Activated CD4-positive, alpha-beta T cell treated with anti-CD3 and anti-CD28 coated beads for 36 hours (primary cell): ENCODE measurements at regions of chr2 and their contacts with region 1.

Region 1: DNA sequence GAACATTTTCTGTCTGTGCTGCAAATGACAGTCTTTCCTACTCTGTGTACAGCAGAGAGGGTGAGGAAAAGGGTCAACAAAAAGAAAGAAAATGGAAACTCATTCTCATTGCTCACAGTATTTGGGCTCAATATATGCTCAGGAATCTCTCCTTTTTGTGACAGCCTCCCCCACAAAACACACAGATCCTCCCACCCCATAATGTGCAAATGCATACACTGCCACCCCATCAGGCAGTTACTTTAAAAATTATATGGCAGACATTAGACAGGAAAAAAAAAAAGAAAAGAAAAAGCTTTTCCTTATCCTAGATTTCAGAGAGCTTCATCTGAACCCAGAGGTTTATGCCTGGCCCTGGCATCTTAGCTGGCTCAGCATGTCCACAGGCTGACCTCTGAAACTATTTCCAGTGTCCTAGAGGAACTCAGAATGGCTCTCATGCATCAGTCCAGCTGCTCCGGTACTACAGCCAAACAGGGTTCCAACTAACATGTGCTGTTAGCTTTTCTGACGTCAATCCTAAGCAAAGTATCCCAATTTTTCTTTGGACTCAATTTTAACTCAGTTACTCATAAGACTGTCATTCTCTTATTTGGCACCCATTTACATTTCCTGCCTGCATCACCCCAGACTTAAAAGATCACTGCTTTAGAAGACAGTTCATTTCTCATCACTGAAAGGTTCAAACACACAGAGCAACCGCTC is 105.9 kb downstream of the RBMS1 start:
- DNase-seq: no peak
- ATAC-seq: peak; percentile 31
- H3K4me3 Mint-ChIP-seq: peak overlapping the region; percentile 51
- H3K27ac Mint-ChIP-seq: peak overlapping the region; percentile 89
- H3K4me1 Mint-ChIP-seq: peaks cover 76% of the 10 kb centered on the region
- H3K27me3 Mint-ChIP-seq: no peaks in the 10 kb centered on the region

Region 2: DNA sequence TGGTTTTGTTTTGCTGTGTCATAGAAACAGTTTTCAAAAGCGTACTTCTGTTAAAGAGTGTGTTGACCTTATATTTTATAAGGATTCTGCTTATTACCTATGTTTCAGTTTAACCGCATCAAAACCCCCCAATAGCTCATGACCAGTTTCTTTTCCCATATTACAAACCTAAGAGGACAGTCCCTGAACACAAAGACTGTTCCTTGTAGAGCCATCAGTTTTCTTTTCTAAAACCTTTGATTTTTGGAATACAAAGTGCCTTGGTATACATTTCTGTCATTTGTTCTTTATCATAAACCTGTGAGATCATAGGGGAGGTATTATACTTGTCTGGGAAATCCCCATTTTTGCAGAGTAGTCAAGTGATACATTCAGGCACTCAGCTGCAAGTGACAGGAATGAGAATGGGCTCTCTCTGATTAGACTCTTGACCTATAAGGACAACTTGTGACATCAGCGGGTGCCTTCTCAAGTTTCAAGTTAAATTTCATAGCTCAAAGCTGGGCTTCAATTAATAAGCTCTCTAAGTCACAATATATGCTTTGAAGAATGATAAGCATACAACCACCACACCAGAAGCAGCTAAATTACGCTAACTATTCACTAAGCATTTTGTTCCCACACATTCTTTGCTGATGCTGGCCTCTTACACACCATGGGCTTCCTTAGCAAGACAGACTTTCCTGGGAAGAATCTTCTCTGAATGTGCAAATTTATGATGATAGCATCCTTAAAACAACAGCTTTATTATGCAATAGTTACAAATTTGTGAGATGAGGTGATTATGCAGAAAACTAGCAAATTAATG is 492.2 kb before region 1 on chr2:
- CTCF ChIA-PET with region 1: no interaction called
- POLR2A ChIA-PET with region 1: interaction called, 10 read pairs
- intact Hi-C with region 1: no loop called
- DNase-seq: peak; percentile 51
- ATAC-seq: peak; percentile 86
- H3K4me3 Mint-ChIP-seq: peak overlapping the region; percentile 46
- H3K27ac Mint-ChIP-seq: peak overlapping the region; percentile 82
- H3K4me1 Mint-ChIP-seq: peaks cover 97% of the 10 kb centered on the region
- H3K27me3 Mint-ChIP-seq: no peaks in the 10 kb centered on the region

Region 3: GRCh38 chr2:160371251-160372009 is 16.3 kb before region 1 on chr2:
- CTCF ChIA-PET with region 1: interaction called, 10 read pairs
- POLR2A ChIA-PET with region 1: no interaction called
- intact Hi-C with region 1: loop called in 1 of 2 experiments (anchors 2 kb)
- DNase-seq: no peak
- ATAC-seq: no peak
- H3K4me3 Mint-ChIP-seq: no peak overlapping the region
- H3K27ac Mint-ChIP-seq: no peak overlapping the region
- H3K4me1 Mint-ChIP-seq: peaks cover 75% of the 10 kb centered on the region
- H3K27me3 Mint-ChIP-seq: no peaks in the 10 kb centered on the region

Region 4: DNA sequence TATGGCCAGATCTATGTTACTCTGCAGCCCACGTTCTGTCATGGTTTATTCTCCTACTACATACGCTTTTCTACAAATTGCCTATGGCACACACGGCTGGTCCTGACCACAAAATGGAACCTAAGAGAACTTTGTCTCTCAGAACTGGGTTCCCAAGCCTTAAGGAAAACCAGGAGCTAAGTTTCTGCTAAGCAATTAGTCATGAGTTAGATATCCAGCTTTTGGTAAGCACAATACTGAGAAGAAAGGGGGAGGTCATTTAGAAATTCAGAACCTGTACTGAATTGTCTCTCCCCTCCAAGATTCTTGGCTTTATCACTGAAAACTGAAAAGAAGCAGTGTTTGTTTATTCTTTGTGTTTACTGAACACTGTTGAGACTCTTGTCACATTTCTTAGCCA is 489.1 kb after region 1 on chr2:
- CTCF ChIA-PET with region 1: no interaction called
- POLR2A ChIA-PET with region 1: no interaction called
- intact Hi-C with region 1: no loop called
- DNase-seq: no peak
- ATAC-seq: no peak
- H3K4me3 Mint-ChIP-seq: no peak overlapping the region
- H3K27ac Mint-ChIP-seq: no peak overlapping the region
- H3K4me1 Mint-ChIP-seq: no peaks in the 10 kb centered on the region
- H3K27me3 Mint-ChIP-seq: peaks cover under 1% of the 10 kb centered on the region